ENCODE measurements at regions of chr1 and their contacts with region 1.

Region 1: DNA sequence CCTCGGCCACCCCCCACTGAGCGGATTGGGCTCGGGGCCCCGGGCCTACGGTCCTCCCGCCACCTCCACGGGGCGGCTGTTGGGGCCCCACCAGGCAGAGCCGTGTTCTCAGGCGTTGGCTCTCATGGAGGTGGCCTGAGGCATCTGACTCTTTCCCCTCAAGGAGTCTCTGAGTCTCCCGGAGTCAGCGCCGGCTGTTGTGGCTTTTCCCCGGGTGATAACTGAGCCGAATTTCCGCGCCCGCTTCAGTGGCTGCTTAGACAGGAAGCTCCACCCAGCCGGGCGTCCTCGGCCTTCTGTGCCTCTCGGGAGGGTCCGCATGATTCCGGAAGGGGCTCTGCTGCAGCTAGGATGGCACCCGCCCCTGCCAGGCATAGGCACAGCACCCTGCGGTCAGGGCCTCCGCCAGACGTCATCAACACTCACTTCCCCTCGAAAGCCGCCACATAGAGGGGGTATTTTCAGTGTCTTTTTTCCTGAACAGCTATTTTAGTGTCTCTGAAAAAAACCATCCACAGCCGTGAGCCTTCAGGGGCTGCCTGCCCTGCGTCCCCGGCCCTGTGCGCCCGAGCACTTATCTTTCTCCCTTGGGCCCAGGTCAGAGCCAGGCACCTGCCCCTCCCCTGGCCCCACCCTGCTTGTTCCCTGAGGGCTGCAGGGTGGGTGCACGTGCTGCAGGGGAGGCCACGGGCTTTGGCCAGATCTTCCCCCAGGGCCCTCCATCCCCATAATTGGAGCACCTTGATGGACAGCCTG is 72.9 kb downstream of the SKI start:
- DNase-seq: peak; percentile 94
- ATAC-seq: peak; percentile 77
- H3K4me3 Mint-ChIP-seq: peak overlapping the region; percentile 74
- H3K27ac Mint-ChIP-seq: peak overlapping the region; percentile 97
- H3K4me1 Mint-ChIP-seq: peaks cover 41% of the 10 kb centered on the region
- H3K27me3 Mint-ChIP-seq: no peaks in the 10 kb centered on the region

Region 2: DNA sequence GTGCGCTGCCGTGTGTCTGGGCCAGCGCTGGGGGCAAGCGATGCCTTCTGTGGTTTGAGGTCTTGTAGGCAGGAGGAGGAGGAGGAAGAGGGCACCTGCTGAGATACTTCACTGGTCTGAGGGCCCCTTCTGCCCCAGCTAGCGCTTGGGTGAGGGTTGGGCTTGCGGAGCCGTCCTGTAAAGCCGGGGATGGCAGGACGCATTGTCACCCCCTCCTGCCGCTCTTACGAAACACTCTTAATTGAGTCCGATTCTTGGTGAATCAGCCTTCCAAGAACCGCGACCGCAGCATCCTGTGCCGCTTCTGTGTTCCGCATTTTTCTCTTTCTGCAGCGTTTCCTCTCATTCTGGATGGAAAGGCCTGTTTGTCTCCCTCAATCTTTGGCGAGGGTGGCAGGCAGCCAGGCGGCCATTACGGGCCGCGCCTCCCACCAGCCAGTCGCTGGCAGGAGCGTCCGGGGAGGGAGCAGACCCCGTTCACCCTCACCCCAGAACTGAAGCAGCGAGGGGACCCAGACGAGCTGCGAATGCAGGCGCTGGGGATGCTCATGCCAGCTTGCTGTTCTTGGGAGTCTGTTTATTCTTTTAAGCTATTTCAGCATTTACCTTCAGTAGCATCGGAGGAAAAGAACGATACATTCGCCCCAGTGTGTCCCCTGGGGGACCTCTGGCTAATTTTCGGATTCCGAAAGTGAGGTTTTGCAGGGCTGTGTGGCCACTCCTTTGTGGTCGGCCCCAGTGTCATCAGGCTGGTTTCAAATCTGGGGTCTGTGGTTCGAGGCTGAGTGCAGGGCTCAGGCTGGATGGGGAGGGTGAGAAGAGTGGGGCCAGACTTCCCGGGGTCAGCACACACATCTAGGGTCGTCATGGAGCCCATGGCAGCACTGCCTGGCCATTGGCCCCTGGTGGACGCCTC is 10.2 kb before region 1 on chr1:
- CTCF ChIA-PET with region 1: interaction called, 20 read pairs
- DNase-seq: peak; percentile 93
- ATAC-seq: peak; percentile 83
- H3K4me3 Mint-ChIP-seq: peak overlapping the region; percentile 69
- H3K27ac Mint-ChIP-seq: peak overlapping the region; percentile 89
- H3K4me1 Mint-ChIP-seq: peaks cover 71% of the 10 kb centered on the region
- H3K27me3 Mint-ChIP-seq: no peaks in the 10 kb centered on the region

Region 3: GRCh38 chr1:2335721-2336455 is 34.9 kb after region 1 on chr1:
- CTCF ChIA-PET with region 1: no interaction called
- DNase-seq: no peak
- ATAC-seq: no peak
- H3K4me3 Mint-ChIP-seq: no peak overlapping the region
- H3K27ac Mint-ChIP-seq: no peak overlapping the region
- H3K4me1 Mint-ChIP-seq: no peaks in the 10 kb centered on the region
- H3K27me3 Mint-ChIP-seq: no peaks in the 10 kb centered on the region

Measured in activated CD8-positive, alpha-beta memory T cell treated with anti-CD3 and anti-CD28 coated beads, Interleukin-2, amount 10 ng/mL, durations not matched to agents 7 days and 5 days (primary cell).